ENCODE measurements at regions of chr6 and their contacts with region 1.

Region 1: GRCh38 chr6:105363100-105363754 is 39.7 kb downstream of the PREP start:
- DNase-seq: no peak
- ATAC-seq: no peak
- H3K4me3 ChIP-seq: no peak overlapping the region
- H3K4me3 Mint-ChIP-seq: no peak overlapping the region
- H3K27ac ChIP-seq: no peak overlapping the region
- H3K27ac Mint-ChIP-seq: no peak overlapping the region
- H3K4me1 ChIP-seq: no peaks in the 10 kb centered on the region
- H3K4me1 Mint-ChIP-seq: peaks cover 0 to 11% (median 4%) of the 10 kb centered on the region in 7 donors
- H3K27me3 ChIP-seq: no peaks in the 10 kb centered on the region
- H3K27me3 Mint-ChIP-seq: no peaks in the 10 kb centered on the region

Region 2: GRCh38 chr6:105087571-105088211 is 275.5 kb before region 1 on chr6:
- CTCF ChIA-PET with region 1: no interaction called
- POLR2A ChIA-PET with region 1: no interaction called
- intact Hi-C with region 1: loop called in 1 of 2 experiments (anchors 5 kb)
- DNase-seq: peak in 6 of 9 donors; percentile 11 to 43 (median 32)
- ATAC-seq: peak; percentile 67
- H3K4me3 ChIP-seq: no peak overlapping the region
- H3K4me3 Mint-ChIP-seq: no peak overlapping the region
- H3K27ac ChIP-seq: no peak overlapping the region
- H3K27ac Mint-ChIP-seq: no peak overlapping the region
- H3K4me1 ChIP-seq: no peaks in the 10 kb centered on the region
- H3K4me1 Mint-ChIP-seq: no peaks in the 10 kb centered on the region
- H3K27me3 ChIP-seq: no peaks in the 10 kb centered on the region
- H3K27me3 Mint-ChIP-seq: peaks cover 4 to 10% (median 6%) of the 10 kb centered on the region in 5 donors

Region 3: GRCh38 chr6:105424175-105424783 is 61.1 kb after region 1 on chr6:
- CTCF ChIA-PET with region 1: no interaction called
- POLR2A ChIA-PET with region 1: no interaction called
- intact Hi-C with region 1: loop called in 1 of 2 experiments (anchors 1 kb)
- DNase-seq: peak; percentile 11 to 62 (median 45)
- ATAC-seq: peak; percentile 85
- H3K4me3 ChIP-seq: no peak overlapping the region
- H3K4me3 Mint-ChIP-seq: no peak overlapping the region
- H3K27ac ChIP-seq: no peak overlapping the region
- H3K27ac Mint-ChIP-seq: no peak overlapping the region
- H3K4me1 ChIP-seq: no peaks in the 10 kb centered on the region
- H3K4me1 Mint-ChIP-seq: peaks cover 0 to 3% (median 0%) of the 10 kb centered on the region in 7 donors
- H3K27me3 ChIP-seq: no peaks in the 10 kb centered on the region
- H3K27me3 Mint-ChIP-seq: peaks cover 0 to 19% (median 4%) of the 10 kb centered on the region in 5 donors

Region 4: GRCh38 chr6:105952772-105953690 is 589.8 kb after region 1 on chr6:
- CTCF ChIA-PET with region 1: no interaction called
- POLR2A ChIA-PET with region 1: no interaction called
- intact Hi-C with region 1: no loop called
- DNase-seq: no peak
- ATAC-seq: no peak
- H3K4me3 ChIP-seq: no peak overlapping the region
- H3K4me3 Mint-ChIP-seq: no peak overlapping the region
- H3K27ac ChIP-seq: no peak overlapping the region
- H3K27ac Mint-ChIP-seq: no peak overlapping the region
- H3K4me1 ChIP-seq: no peaks in the 10 kb centered on the region
- H3K4me1 Mint-ChIP-seq: peaks cover 0 to 8% (median 0%) of the 10 kb centered on the region in 7 donors
- H3K27me3 ChIP-seq: no peaks in the 10 kb centered on the region
- H3K27me3 Mint-ChIP-seq: peaks cover 0 to 12% (median 4%) of the 10 kb centered on the region in 5 donors

Measured in naive thymus-derived CD4-positive, alpha-beta T cell (primary cell).